Left cardiac atrium (tissue), 4 donors: ENCODE measurements at regions of chr18 and their contacts with region 1.

Region 1: DNA sequence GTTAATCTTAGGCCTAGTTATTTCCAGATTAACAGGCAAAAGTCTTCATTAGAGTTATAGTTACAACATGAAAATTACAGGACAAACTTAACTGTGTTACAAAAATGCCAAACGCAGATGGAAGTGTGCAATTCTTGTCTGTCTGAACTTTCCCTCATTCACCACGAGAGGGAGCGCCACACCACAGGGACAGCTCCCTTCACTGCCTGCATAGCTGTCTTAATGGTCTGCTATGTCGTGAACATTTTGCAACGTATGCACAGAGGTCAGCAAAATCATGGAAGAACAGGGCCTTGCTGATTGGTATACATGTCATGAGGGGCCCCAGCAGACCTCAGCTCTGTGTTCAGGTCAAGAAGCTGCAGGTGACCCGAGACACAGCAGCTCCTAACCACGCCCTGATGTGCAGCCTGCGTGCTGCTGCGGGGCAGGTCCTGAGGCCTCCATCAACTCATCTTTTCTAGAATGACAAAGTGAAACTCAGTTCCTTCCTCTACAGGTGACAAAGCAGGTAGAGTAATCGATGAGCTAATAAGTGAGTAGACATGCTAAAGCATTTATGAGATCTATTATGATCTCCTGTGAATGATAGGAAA is 78.8 kb upstream of the ATP8B1 start:
- DNase-seq: peak; percentile 62
- ATAC-seq: peak; percentile 87 to 93

Region 2: DNA sequence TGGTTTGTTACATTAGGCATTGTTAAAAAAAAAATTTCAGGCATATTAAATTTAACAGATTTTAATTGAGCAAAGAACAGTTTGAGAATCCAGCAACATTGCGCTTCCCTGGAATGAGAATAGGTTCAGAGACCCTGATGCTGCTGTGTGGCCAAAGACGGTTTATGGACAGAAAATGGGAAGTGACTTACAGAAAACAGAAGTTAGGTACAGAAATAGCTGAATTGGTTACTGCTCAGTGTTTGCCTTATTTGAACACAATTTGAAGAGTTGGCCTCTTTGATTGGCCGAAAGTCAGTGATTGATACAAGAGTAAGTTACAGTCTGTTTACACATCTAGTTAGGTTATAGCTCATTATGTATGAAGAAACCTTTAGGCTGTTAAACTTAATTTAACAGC is 156.1 kb after region 1 on chr18:
- intact Hi-C with region 1: loop called (anchors 10 kb)
- DNase-seq: no peak
- ATAC-seq: no peak

Region 3: GRCh38 chr18:58128381-58129374 is 246.8 kb after region 1 on chr18:
- intact Hi-C with region 1: loop called (anchors 5 to 10 kb)
- DNase-seq: no peak
- ATAC-seq: no peak

Region 4: GRCh38 chr18:58135701-58136331 is 253.9 kb after region 1 on chr18:
- intact Hi-C with region 1: loop called in 1 of 2 experiments (anchors 5 kb)
- DNase-seq: peak; percentile 57
- ATAC-seq: peak; percentile 77 to 80

Region 5: DNA sequence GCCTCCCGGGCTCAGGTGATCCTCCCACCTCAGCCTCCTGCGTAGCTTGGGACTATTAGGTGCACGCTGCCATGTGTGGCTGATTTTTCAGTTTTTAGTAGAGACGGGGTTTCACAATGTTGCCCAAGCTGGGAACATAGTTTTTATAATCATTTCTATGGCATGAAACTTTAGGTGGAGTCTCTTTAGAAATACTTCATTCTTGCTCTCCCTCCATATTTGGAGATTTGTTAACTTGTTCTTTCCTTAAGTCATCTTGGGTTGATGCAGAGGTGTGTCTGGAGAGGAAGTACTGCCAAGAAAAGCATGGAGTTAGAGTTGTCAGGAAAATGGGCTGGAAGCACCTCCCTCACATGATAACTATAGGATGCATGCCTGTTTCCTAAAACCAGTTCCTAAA is 1000.1 kb after region 1 on chr18:
- intact Hi-C with region 1: no loop called
- DNase-seq: no peak
- ATAC-seq: peak in 1 of 2 donors; percentile 27